Caco-2 (cell line): ENCODE measurements at regions of chr13 and their contacts with region 1.

Region 1: DNA sequence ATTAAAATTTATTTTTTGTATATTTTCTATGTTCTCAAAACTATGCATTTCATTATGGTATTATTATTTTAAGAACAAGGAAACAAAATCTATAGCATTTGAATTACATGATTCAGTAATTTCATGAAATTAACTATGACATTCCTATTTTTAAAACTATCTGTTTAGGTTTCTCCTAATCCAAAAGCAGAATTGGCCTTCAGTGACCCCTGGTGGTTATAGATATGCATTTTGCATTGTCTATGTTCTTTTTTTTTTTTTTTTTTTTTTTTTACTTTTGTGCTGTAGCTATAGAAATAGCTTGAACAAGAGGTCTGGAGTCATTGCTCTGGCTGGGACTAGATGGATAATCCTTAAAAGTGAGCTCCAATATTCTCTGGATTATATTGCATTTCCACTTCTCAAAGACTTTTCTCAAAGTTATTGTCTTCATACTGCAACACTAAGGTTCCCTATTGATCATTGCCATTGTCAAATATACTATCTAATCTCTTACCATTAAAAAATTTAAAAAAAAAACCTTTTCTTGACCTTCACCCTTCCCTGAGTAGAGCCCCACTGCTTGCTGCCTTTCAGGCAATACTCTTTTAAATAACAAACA is 15.9 kb upstream of the DNAJC3 start:
- DNase-seq: peak in 1 of 2 experiments; percentile 67
- H3K4me3 ChIP-seq: no peak overlapping the region
- H3K4me3 Mint-ChIP-seq: no peak overlapping the region
- H3K27ac Mint-ChIP-seq: no peak overlapping the region
- H3K4me1 ChIP-seq: peaks cover 15% of the 10 kb centered on the region
- H3K4me1 Mint-ChIP-seq: peaks cover 14% of the 10 kb centered on the region
- H3K27me3 ChIP-seq: no peaks in the 10 kb centered on the region
- H3K27me3 Mint-ChIP-seq: peaks cover 3% of the 10 kb centered on the region
- CTCF ChIP-seq: peak; percentile 67 to 75

Region 2: GRCh38 chr13:95494082-95494681 is 166.9 kb before region 1 on chr13:
- CTCF ChIA-PET with region 1: no interaction called
- POLR2A ChIA-PET with region 1: no interaction called
- intact Hi-C with region 1: loop called (anchors 1 kb)
- DNase-seq: peak in 1 of 2 experiments; percentile 66
- H3K4me3 ChIP-seq: no peak overlapping the region
- H3K4me3 Mint-ChIP-seq: no peak overlapping the region
- H3K27ac Mint-ChIP-seq: no peak overlapping the region
- H3K4me1 ChIP-seq: peaks cover 9% of the 10 kb centered on the region
- H3K4me1 Mint-ChIP-seq: peaks cover 8% of the 10 kb centered on the region
- H3K27me3 ChIP-seq: no peaks in the 10 kb centered on the region
- H3K27me3 Mint-ChIP-seq: no peaks in the 10 kb centered on the region
- CTCF ChIP-seq: peak; percentile 48 to 73

Region 3: GRCh38 chr13:95536632-95537241 is 124.3 kb before region 1 on chr13:
- CTCF ChIA-PET with region 1: interaction called, 4 read pairs
- POLR2A ChIA-PET with region 1: no interaction called
- intact Hi-C with region 1: loop called (anchors 2 kb)
- DNase-seq: no peak
- H3K4me3 ChIP-seq: no peak overlapping the region
- H3K4me3 Mint-ChIP-seq: no peak overlapping the region
- H3K27ac Mint-ChIP-seq: no peak overlapping the region
- H3K4me1 ChIP-seq: no peaks in the 10 kb centered on the region
- H3K4me1 Mint-ChIP-seq: peaks cover 25% of the 10 kb centered on the region
- H3K27me3 ChIP-seq: no peaks in the 10 kb centered on the region
- H3K27me3 Mint-ChIP-seq: peaks cover 3% of the 10 kb centered on the region
- CTCF ChIP-seq: peak; percentile 32 to 55

Region 4: DNA sequence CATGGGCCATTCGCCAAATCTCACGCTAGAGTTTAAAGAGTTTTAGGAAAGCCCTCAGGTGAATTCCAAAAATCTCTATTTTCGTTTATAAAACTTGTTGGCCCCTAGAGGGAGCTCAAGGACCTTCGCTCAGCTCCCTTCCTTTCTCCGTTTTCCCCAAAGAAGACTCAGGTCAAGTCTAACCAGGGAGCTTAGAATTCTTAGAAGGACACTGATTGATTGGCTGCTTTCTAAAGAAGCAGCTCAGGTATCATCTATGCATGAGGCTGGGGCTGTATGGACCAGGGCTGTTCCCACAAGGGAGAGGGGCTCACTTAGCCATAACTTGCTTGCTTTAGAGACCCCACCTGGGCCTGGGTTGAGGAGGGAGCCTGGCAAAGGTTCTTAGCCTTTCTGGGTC is 37.1 kb before region 1 on chr13:
- CTCF ChIA-PET with region 1: interaction called, 65 read pairs
- POLR2A ChIA-PET with region 1: no interaction called
- intact Hi-C with region 1: loop called (anchors 1 kb)
- DNase-seq: peak in 1 of 2 experiments; percentile 68
- H3K4me3 ChIP-seq: no peak overlapping the region
- H3K4me3 Mint-ChIP-seq: no peak overlapping the region
- H3K27ac Mint-ChIP-seq: no peak overlapping the region
- H3K4me1 ChIP-seq: no peaks in the 10 kb centered on the region
- H3K4me1 Mint-ChIP-seq: no peaks in the 10 kb centered on the region
- H3K27me3 ChIP-seq: no peaks in the 10 kb centered on the region
- H3K27me3 Mint-ChIP-seq: no peaks in the 10 kb centered on the region
- CTCF ChIP-seq: peak; percentile 75 to 82

Region 5: DNA sequence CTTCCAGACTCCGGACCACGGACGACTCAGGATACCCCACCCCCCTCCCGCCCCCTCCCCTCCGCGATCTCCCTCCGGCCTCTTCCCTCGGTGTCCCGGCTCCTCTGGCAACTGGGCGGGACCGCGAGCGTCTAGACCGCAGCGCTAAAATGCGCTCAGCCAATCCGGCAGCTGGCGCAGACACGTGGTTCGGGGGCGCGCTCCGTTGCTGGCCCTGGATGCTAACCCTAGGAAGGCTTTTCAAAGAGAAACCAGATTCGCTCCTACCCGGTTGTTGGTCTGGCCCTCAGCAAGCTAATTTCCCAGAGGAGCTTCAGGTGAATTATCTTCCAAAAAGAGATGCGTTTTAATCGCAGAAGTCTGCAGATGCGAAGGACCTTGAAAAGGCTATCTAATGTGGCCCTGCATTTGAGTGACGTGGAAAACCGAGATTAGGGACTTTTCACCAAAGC is 16.5 kb before region 1 on chr13 and contains the start of gene DZIP1:
- CTCF ChIA-PET with region 1: interaction called, 7 read pairs
- POLR2A ChIA-PET with region 1: no interaction called
- intact Hi-C with region 1: loop called (anchors 1 kb)
- DNase-seq: peak; percentile 74 to 80
- H3K4me3 ChIP-seq: peak within 1 kb of the TSS; percentile 30
- H3K4me3 Mint-ChIP-seq: peak within 1 kb of the TSS; percentile 81
- H3K27ac Mint-ChIP-seq: no peak within 1 kb of the TSS
- H3K4me1 ChIP-seq: 0 out of 2 replicates have a peak, but pooled peaks cover 9% of the 10 kb centered on the region
- H3K4me1 Mint-ChIP-seq: no peaks in the 10 kb centered on the region
- H3K27me3 ChIP-seq: no peaks in the 10 kb centered on the region
- H3K27me3 Mint-ChIP-seq: no peaks in the 10 kb centered on the region
- CTCF ChIP-seq: no peak
- total RNA-seq, gene DZIP1: 6.5 and 8.1 TPM in 2 replicates

Region 6: GRCh38 chr13:95676762-95677563 is 15.9 kb after region 1 on chr13 and contains the start of gene DNAJC3:
- CTCF ChIA-PET with region 1: interaction called, 4 read pairs
- POLR2A ChIA-PET with region 1: interaction called, 8 read pairs
- intact Hi-C with region 1: loop called (anchors 1 kb)
- DNase-seq: peak; percentile 99
- H3K4me3 ChIP-seq: peak within 1 kb of the TSS; percentile 82
- H3K4me3 Mint-ChIP-seq: peak within 1 kb of the TSS; percentile 89
- H3K27ac Mint-ChIP-seq: peak within 1 kb of the TSS; percentile 95
- H3K4me1 ChIP-seq: peaks cover 17% of the 10 kb centered on the region; the same call in 1 of the 2 replicates
- H3K4me1 Mint-ChIP-seq: peaks cover 27% of the 10 kb centered on the region
- H3K27me3 ChIP-seq: no peaks in the 10 kb centered on the region
- H3K27me3 Mint-ChIP-seq: no peaks in the 10 kb centered on the region
- CTCF ChIP-seq: no peak
- total RNA-seq, gene DNAJC3: 36.8 and 38.0 TPM in 2 replicates